Breast epithelium (tissue), 4 donors: ENCODE measurements at regions of chr5 and their contacts with region 1.

Region 1: GRCh38 chr5:137470111-137470920 is 28.8 kb downstream of the SPOCK1 start:
- DNase-seq: no peak
- H3K4me3 ChIP-seq: no peak overlapping the region
- H3K27ac ChIP-seq: no peak overlapping the region
- H3K4me1 ChIP-seq: no peaks in the 10 kb centered on the region
- H3K27me3 ChIP-seq: no peaks in the 10 kb centered on the region
- CTCF ChIP-seq: no peak
- POLR2A ChIP-seq: no peak

Region 2: GRCh38 chr5:137155261-137156000 is 314.9 kb before region 1 on chr5:
- intact Hi-C with region 1: no loop called
- DNase-seq: no peak
- H3K4me3 ChIP-seq: no peak overlapping the region
- H3K27ac ChIP-seq: no peak overlapping the region
- H3K4me1 ChIP-seq: no peaks in the 10 kb centered on the region
- H3K27me3 ChIP-seq: no peaks in the 10 kb centered on the region
- CTCF ChIP-seq: no peak
- POLR2A ChIP-seq: no peak

Region 3: DNA sequence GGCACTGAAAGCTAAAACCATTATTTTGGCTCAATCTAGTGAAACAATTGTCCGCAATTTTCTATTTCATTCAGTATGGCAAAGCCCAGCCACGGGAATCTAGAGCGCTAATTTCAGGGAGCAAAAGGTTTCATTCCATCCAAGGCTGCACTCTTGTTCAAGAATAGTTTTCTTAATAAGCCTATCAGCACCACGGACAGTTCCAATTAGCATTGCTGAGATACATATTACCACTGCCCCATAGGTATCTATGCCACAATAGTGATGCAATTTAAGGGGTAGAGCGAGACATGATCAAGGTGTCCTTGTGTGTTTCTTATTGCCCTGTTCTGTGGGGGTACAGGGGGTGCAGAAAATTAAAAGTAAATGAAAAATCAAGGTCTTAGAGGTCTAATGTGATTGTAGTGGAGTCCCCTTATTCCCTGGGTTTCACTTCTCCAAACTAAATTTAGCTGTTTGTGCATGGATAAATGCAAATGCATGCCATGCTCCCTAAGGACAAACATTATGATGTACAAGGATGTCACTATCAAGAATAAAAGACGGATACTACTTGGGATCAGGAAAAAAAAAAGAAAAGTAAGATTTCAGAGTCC is 16.7 kb before region 1 on chr5:
- intact Hi-C with region 1: loop called (anchors 2 kb)
- DNase-seq: no peak
- H3K4me3 ChIP-seq: no peak overlapping the region
- H3K27ac ChIP-seq: no peak overlapping the region
- H3K4me1 ChIP-seq: no peaks in the 10 kb centered on the region
- H3K27me3 ChIP-seq: no peaks in the 10 kb centered on the region
- CTCF ChIP-seq: no peak
- POLR2A ChIP-seq: no peak

Region 4: DNA sequence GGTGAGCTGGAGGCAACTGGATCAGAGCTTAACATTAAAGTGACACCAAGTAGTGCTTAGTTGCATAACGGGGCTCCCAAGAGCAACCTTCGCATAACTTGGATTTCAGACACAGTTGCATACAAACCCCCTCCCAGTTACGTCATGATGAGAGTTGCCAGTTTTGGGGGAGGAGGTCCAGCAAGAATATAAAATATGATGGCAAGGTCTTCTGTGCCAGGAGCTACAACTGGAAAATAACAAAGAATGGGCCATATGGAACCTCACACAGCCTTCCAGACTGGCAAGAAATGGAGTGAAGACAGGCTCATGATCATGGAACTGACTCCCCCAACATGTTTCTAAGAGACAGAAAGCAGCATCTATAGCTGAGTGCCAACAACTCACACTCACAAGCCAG is 20.3 kb after region 1 on chr5:
- intact Hi-C with region 1: loop called (anchors 1 kb)
- DNase-seq: no peak
- H3K4me3 ChIP-seq: no peak overlapping the region
- H3K27ac ChIP-seq: no peak overlapping the region
- H3K4me1 ChIP-seq: no peaks in the 10 kb centered on the region
- H3K27me3 ChIP-seq: no peaks in the 10 kb centered on the region
- CTCF ChIP-seq: no peak
- POLR2A ChIP-seq: no peak